Gastrocnemius medialis (tissue), 4 donors: ENCODE measurements at regions of chr7 and their contacts with region 1.

Region 1: GRCh38 chr7:102279537-102280400 is 6.9 kb upstream of the SH2B2 start:
- DNase-seq: peak in 1 of 2 donors; percentile 37
- ATAC-seq: peak; percentile 56 to 82
- H3K4me3 ChIP-seq: no peak overlapping the region
- H3K27ac ChIP-seq: no peak overlapping the region
- H3K4me1 ChIP-seq: peaks cover 0 to 6% of the 10 kb centered on the region in 2 donors
- H3K27me3 ChIP-seq: no peaks in the 10 kb centered on the region
- CTCF ChIP-seq: peak; percentile 86 to 95 (median 94)
- POLR2A ChIP-seq: no peak

Region 2: DNA sequence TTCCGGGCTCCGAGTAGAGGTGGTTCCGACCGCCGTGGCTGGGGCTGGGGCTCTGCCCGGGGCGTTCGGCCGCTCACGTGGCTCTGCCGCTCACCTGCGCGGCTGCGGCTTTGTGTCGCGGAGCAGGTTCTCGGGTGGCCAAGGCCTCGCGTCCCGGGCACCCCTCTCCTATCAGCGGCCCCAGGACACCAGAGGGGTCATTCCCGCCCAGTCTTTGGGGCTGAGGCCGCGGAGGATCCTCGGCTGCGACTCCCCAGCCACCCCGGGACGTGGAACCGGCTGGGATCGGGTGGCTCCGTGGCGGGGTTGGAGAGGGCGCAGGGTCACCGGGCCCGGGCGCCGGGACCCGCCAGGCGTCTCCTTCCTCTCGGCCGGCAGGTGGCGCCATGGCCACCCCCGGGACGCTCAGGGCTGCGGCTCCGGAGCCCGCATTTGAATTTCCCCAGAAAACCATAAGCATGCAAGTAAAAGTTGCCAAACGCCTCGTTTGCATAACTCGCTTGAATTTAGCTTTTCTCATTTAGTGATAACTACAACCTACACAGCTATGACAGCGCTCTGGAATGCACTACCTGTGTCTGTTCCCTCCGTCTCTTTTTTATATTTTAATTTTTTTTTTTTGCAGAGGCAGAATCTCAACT is 915.9 kb before region 1 on chr7:
- in situ Hi-C with region 1: no loop called
- intact Hi-C with region 1: loop called (anchors 10 kb)
- DNase-seq: peak; percentile 14 to 18
- ATAC-seq: peak in 1 of 2 donors; percentile 86
- H3K4me3 ChIP-seq: peak overlapping the region; percentile 45 to 81 (median 58)
- H3K27ac ChIP-seq: no peak overlapping the region
- H3K4me1 ChIP-seq: peaks cover 4 to 7% of the 10 kb centered on the region in 2 donors
- H3K27me3 ChIP-seq: peaks cover 6 to 30% (median 30%) of the 10 kb centered on the region in 3 donors
- CTCF ChIP-seq: peak; percentile 57 to 88 (median 76)
- POLR2A ChIP-seq: no peak

Region 3: GRCh38 chr7:102390697-102391484 is 111.1 kb after region 1 on chr7:
- in situ Hi-C with region 1: loop called (anchors 5 kb)
- intact Hi-C with region 1: loop called (anchors 1 kb)
- DNase-seq: peak; percentile 62 to 81
- ATAC-seq: peak; percentile 88 to 91
- H3K4me3 ChIP-seq: no peak overlapping the region
- H3K27ac ChIP-seq: no peak overlapping the region
- H3K4me1 ChIP-seq: peaks cover 0 to 5% of the 10 kb centered on the region in 2 donors
- H3K27me3 ChIP-seq: no peaks in the 10 kb centered on the region
- CTCF ChIP-seq: peak; percentile 91 to 96 (median 94)
- POLR2A ChIP-seq: no peak